Naive thymus-derived CD4-positive, alpha-beta T cell (primary cell): ENCODE measurements at regions of chr9 and their contacts with region 1.

Region 1: DNA sequence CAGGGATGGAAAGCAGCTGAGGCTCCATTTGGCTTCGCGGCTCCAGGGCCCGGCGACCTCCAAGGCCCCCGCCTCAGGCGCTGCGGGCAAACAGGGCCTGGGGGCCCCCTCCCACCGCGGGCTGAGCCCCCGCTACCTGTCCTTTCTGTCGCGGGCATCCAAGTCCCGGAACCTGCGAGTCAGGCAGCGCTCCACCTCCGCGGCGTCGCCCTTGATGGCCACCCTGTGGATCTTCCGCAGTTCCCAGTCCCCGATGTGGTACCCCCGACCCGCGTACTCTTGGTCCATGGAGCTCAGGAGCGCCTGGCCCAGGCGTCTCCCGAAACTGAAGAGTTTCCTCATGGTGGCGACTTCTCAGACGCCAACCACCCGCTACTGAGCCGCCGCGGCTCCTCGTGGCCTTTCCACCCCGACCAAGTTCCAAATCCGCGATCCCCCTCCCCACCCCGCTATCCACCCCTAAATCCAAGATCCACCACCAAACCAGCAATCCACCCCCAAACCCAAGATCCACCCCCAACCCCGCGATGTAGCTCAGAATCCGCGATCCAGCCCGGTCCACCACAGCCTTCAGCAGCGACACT is 86.5 kb upstream of the CCDC180 start:
- DNase-seq: no peak
- ATAC-seq: peak; percentile 38
- H3K4me3 ChIP-seq: peak overlapping the region; percentile 46
- H3K4me3 Mint-ChIP-seq: peak overlapping the region; percentile 78 to 89 (median 83)
- H3K27ac ChIP-seq: no peak overlapping the region
- H3K27ac Mint-ChIP-seq: no peak overlapping the region
- H3K4me1 ChIP-seq: no peaks in the 10 kb centered on the region
- H3K4me1 Mint-ChIP-seq: peaks cover 4 to 11% (median 6%) of the 10 kb centered on the region in 7 donors
- H3K27me3 ChIP-seq: peaks cover 4 to 5% of the 10 kb centered on the region in 2 donors
- H3K27me3 Mint-ChIP-seq: peaks cover 46 to 69% (median 52%) of the 10 kb centered on the region in 5 donors

Region 2: DNA sequence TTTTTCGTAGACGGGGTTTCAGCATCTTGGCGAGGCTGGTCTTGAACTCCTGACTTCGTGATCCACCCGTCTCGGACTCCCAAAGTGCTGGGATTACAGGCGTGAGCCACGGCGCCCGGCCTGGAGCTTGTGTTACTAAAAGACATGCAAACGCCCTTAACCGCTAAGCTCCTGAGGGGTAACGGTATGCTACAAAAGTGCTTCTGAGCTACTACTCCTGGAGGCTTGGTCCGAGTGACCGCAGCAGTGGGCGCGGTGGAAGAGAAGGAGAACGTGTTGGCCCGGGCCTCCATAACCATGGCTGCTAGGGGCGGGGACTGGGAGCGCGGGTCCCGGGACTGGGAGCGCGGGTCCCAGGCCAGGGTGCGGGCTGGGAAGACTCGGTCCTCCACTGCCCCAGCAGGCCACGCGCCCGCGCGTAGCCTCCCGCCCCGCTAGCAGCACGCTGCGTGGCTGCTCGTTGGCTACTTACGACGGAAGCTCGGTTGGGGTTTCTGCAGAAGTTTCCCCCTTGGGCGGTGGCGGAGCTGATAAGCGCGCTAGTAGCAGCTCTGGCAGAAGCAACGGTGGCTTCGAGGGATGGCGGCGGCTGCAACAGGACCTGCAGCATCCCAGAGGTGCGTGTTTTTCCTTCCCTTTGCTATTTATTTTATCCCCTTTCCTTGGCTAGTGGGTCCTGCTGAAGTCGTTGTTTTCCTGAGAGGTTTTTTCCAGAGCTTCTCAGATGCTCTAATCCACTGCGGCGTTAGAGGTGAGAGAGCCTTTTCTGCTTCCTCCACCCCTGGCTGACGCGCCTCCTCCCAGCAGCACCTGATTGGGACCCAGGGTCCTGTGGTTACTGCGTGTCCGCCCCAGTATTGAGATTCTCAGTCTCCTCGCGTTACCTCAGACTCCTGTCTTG is 17.2 kb after region 1 on chr9:
- CTCF ChIA-PET with region 1: no interaction called
- POLR2A ChIA-PET with region 1: interaction called, 5 read pairs
- intact Hi-C with region 1: loop called in 1 of 2 experiments (anchors 2 kb)
- DNase-seq: peak; percentile 48 to 82 (median 70)
- ATAC-seq: peak; percentile 94
- H3K4me3 ChIP-seq: peak overlapping the region; percentile 71
- H3K4me3 Mint-ChIP-seq: peak overlapping the region; percentile 87 to 98 (median 95)
- H3K27ac ChIP-seq: peak overlapping the region; percentile 63
- H3K27ac Mint-ChIP-seq: peak overlapping the region; percentile 84 to 94 (median 90)
- H3K4me1 ChIP-seq: peaks cover 0 to 5% of the 10 kb centered on the region in 2 donors
- H3K4me1 Mint-ChIP-seq: peaks cover 11 to 38% (median 24%) of the 10 kb centered on the region in 7 donors
- H3K27me3 ChIP-seq: no peaks in the 10 kb centered on the region
- H3K27me3 Mint-ChIP-seq: peaks cover 0 to 5% (median 0%) of the 10 kb centered on the region in 5 donors

Region 3: DNA sequence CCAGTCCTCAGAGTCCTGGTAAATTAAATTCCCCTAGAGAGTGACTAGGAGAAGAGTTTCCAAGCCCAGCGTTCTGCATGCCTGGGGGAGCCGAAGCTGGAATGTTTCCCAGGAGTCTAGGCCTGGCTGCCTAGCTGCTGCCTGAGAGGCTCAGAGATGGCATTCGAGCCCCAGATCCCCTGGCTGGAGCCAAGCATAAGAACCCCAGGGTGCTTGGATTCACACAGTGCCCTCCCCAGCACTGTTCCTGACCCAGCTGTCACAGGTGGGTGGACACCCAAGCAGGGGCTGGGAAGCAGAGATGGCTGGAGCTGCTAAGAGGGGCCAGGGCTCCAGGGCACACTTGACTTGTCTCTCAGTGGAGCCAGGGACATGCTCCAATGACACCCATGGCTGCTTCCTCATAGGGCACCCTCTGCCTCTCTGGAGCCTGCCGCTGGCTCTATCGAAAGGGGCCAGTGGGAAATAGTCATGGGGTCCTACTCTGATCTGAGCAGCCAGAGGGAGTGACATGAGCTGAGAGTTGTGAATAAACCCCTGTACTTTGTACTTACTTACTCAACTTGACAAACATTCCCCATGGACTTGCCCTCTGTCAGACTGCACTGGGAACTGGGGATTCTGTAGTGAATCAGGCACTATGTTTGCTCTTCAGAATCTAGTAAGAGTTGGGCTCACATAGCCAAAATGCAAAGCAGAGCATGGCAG is 538.7 kb after region 1 on chr9:
- CTCF ChIA-PET with region 1: no interaction called
- POLR2A ChIA-PET with region 1: no interaction called
- intact Hi-C with region 1: no loop called
- DNase-seq: no peak
- ATAC-seq: no peak
- H3K4me3 ChIP-seq: no peak overlapping the region
- H3K4me3 Mint-ChIP-seq: no peak overlapping the region
- H3K27ac ChIP-seq: no peak overlapping the region
- H3K27ac Mint-ChIP-seq: no peak overlapping the region
- H3K4me1 ChIP-seq: no peaks in the 10 kb centered on the region
- H3K4me1 Mint-ChIP-seq: peaks cover 0 to 8% (median 0%) of the 10 kb centered on the region in 7 donors
- H3K27me3 ChIP-seq: no peaks in the 10 kb centered on the region
- H3K27me3 Mint-ChIP-seq: peaks cover 36 to 55% (median 43%) of the 10 kb centered on the region in 5 donors

Region 4: GRCh38 chr9:99162759-99163364 is 1941.9 kb after region 1 on chr9:
- CTCF ChIA-PET with region 1: no interaction called
- POLR2A ChIA-PET with region 1: no interaction called
- intact Hi-C with region 1: no loop called
- DNase-seq: peak in 7 of 9 donors; percentile 22 to 59 (median 47)
- ATAC-seq: peak; percentile 61
- H3K4me3 ChIP-seq: no peak overlapping the region
- H3K4me3 Mint-ChIP-seq: peak overlapping the region in 1 of 10 donors; percentile 0
- H3K27ac ChIP-seq: no peak overlapping the region
- H3K27ac Mint-ChIP-seq: no peak overlapping the region
- H3K4me1 ChIP-seq: peaks cover 0 to 8% of the 10 kb centered on the region in 2 donors
- H3K4me1 Mint-ChIP-seq: peaks cover 9 to 32% (median 17%) of the 10 kb centered on the region in 7 donors
- H3K27me3 ChIP-seq: no peaks in the 10 kb centered on the region
- H3K27me3 Mint-ChIP-seq: peaks cover 7 to 32% (median 10%) of the 10 kb centered on the region in 5 donors